ENCODE measurements at regions of chr22 and their contacts with region 1.

Region 1: DNA sequence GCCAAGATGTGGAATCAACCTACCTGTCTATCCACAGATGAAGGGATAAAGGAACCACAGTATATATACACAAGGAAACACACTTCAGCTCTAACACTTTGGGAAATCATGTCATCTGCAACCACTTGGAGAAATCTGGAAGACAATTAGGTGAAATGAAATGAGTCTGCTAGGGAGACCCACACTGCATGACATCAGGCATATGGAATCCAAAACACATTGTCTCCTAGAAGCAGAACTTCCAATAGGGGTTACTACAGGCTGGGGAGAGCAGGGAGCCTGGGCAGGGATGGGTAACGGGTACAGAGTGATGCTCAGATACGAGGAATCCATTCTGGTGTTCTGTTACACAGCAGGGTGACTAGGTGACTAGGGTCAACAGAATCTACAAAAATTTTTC is 18.3 kb downstream of the RGL4 start:
- DNase-seq: no peak
- H3K4me3 Mint-ChIP-seq: no peak overlapping the region
- H3K27ac Mint-ChIP-seq: peak overlapping the region; percentile 79
- H3K4me1 Mint-ChIP-seq: peaks cover 63% of the 10 kb centered on the region
- H3K27me3 Mint-ChIP-seq: no peaks in the 10 kb centered on the region

Region 2: GRCh38 chr22:23012081-23012622 is 697.0 kb before region 1 on chr22:
- CTCF ChIA-PET with region 1: no interaction called
- intact Hi-C with region 1: loop called (anchors 1 kb)
- DNase-seq: peak; percentile 69
- H3K4me3 Mint-ChIP-seq: no peak overlapping the region
- H3K27ac Mint-ChIP-seq: peak overlapping the region; percentile 48
- H3K4me1 Mint-ChIP-seq: peaks cover 26% of the 10 kb centered on the region
- H3K27me3 Mint-ChIP-seq: peaks cover 43% of the 10 kb centered on the region

Region 3: DNA sequence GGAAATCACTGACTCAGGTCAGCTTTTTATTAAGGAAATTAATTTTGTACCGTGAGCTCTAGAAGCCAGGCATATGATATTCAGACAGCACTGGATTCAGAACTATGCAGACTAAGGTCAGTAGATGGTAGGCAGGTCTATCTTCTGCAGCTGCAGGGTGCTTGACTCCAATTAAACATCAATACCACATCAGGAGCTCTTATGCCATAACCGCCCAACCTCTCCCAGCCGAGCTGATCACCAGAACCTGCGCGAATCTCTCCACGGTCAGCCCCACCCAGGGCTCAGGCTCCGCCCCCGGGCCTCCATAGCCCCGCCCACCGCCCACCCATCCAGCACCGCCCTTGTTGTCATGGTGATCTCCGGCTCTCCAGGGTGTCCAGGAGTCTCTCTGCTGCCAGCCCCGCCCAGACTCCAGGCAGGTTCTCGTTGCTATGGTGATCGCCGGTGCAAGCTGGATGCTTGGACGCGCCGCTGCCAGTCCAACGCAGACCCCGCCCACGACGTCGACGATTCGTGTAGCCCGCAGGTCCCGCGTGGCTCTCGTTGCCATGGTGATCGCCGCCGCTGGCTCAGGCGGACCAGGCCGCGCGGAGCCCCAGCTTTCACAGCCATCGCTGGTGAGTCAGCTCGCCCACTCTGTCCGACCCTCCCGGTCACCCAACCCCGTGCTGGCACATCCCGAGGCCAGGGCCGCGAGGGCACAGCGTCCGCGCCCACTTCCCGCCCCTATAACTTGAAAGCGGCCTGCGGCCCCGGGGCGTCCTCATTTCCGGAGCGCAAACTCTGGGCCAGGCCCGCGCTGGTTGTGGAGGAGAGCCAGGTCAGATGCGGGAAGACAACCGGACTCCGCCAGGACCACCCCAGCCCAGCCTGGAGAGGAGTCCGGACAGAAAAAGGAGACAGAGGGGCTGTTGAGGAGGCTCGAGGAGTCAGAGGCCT is 563.9 kb before region 1 on chr22 and contains the start of gene RAB36:
- CTCF ChIA-PET with region 1: no interaction called
- intact Hi-C with region 1: loop called (anchors 5 kb)
- DNase-seq: peak; percentile 82
- H3K4me3 Mint-ChIP-seq: peak within 1 kb of the TSS; percentile 63
- H3K27ac Mint-ChIP-seq: no peak within 1 kb of the TSS
- H3K4me1 Mint-ChIP-seq: peaks cover 44% of the 10 kb centered on the region
- H3K27me3 Mint-ChIP-seq: no peaks in the 10 kb centered on the region
- total RNA-seq, gene RAB36: not detected

Region 4: DNA sequence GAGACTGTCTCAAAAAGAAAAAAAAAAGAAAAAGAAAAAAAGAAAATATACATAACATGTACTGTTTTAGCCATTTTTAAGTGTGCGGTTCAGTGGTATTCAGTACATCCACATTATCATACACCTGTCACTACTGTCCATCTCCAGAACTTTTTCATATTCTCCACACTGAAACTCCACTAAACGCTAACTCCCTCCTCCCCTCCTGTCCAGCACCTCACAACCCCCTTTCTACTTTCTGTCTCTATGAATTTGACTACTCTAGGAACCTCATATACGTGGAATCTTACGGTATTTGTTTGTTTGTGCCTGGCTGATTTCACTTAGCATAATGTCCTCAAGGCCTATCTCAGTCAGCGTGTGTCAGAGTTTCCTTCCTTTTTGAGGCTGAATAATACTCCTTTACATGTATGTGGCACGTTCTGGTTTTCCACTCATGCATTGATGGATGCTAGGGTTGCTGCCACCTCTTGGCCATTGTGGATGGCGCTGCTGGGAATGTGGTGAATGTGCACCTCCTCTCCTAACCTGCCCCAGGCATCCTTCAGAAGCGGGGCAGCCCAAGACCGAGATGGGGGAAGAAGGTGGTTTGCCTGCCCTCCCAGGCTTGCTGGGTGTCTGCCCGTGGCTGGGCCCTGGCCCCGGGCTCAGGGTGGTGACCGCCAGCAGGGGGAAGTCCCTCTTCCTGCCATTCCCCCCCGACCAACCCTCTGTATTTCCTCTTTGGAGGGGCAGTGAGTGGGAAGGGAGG is 468.3 kb before region 1 on chr22:
- CTCF ChIA-PET with region 1: no interaction called
- intact Hi-C with region 1: loop called (anchors 5 kb)
- DNase-seq: peak; percentile 79
- H3K4me3 Mint-ChIP-seq: no peak overlapping the region
- H3K27ac Mint-ChIP-seq: peak overlapping the region; percentile 73
- H3K4me1 Mint-ChIP-seq: peaks cover 93% of the 10 kb centered on the region
- H3K27me3 Mint-ChIP-seq: no peaks in the 10 kb centered on the region

Region 5: DNA sequence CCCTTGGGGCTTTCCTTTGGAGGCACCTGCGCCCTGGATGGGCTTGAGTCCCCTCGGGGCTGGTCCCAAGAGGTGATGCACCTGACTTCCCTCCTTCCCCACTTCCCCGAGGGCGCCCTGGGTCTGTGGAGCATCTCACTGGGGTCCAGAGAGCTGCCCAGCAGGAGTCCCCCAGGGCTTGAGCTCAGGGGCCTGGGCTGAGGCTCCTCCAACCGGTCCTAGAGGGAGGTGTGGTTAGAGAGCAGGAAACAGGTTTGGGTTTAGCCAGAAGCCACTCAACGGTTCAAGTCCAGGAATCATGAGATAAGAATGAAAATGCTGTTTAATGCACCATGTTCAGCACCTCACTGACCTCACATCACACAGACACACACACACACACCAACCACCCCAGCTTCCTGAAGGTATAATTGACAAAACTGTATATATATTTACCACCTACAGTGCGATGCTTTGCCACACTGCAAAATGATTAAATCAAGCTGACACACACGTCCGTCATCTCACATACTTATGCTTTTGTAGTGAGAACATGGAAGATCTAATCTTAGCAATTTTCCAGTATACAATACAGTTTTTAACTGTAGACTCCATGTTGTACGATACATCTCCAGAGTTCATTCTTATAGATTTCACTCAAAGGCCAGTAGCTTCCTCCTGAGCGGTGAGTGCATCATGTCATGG is 128.4 kb before region 1 on chr22:
- CTCF ChIA-PET with region 1: no interaction called
- intact Hi-C with region 1: no loop called
- DNase-seq: no peak
- H3K4me3 Mint-ChIP-seq: no peak overlapping the region
- H3K27ac Mint-ChIP-seq: no peak overlapping the region
- H3K4me1 Mint-ChIP-seq: no peaks in the 10 kb centered on the region
- H3K27me3 Mint-ChIP-seq: peaks cover 30% of the 10 kb centered on the region

Region 6: GRCh38 chr22:23696326-23696851 is 12.7 kb before region 1 on chr22:
- CTCF ChIA-PET with region 1: no interaction called
- intact Hi-C with region 1: loop called (anchors 1 kb)
- DNase-seq: peak; percentile 94
- H3K4me3 Mint-ChIP-seq: peak overlapping the region; percentile 93
- H3K27ac Mint-ChIP-seq: peak overlapping the region; percentile 100
- H3K4me1 Mint-ChIP-seq: peaks cover 46% of the 10 kb centered on the region
- H3K27me3 Mint-ChIP-seq: no peaks in the 10 kb centered on the region

Region 7: DNA sequence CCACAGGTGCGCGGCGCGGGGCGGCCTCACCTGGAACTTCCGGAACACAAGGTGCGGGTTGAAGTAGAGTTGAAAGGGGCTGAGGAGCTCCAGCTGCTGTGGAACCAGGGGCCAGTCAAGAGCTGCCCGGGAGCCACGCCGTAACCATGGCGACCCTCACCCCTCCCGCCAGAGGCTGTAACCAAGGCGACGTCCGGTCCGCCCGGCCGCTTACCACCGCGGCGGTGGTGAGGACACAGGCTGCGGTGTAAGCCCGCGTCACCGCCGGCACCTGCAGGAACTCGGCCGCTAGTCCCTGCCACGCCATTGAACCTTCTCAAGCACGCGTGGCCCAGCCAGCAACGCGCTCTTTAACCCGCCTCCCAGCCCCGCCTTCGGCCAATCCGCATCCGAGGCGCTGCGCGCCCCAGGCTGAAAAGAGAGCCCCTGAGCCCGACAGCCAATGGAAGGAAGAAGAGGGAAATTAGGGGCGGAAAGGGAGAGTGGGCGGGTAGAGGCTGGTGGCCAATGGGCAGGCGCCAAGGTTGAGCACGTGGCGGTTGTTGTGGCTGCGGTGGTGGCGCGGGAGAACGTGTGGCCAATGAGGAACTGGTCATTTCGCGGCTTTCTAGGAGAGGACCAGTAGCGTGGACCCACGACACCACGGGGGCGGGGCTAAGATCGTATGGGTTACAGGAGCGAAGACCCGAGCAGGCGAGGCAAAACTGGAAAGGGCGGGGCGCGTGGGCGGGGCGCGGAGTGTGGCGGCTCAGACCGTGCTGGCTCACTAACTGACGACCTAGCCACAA is 129.8 kb after region 1 on chr22 and contains the start of gene DERL3:
- CTCF ChIA-PET with region 1: no interaction called
- intact Hi-C with region 1: loop called (anchors 1 kb)
- DNase-seq: peak; percentile 97
- H3K4me3 Mint-ChIP-seq: peak within 1 kb of the TSS; percentile 84
- H3K27ac Mint-ChIP-seq: peak within 1 kb of the TSS; percentile 37
- H3K4me1 Mint-ChIP-seq: peaks cover 16% of the 10 kb centered on the region
- H3K27me3 Mint-ChIP-seq: peaks cover 3% of the 10 kb centered on the region
- total RNA-seq, gene DERL3: 7.3 to 7.5 TPM

Measured in activated naive CD4-positive, alpha-beta T cell treated with anti-CD3 and anti-CD28 coated beads for 36 hours (primary cell).